CD14-positive monocyte (primary cell): ENCODE measurements at regions of chr2 and their contacts with region 1.

Region 1: GRCh38 chr2:231612179-231613053 is 19.8 kb downstream of the TEX44 start:
- DNase-seq: peak; percentile 98 to 99 (median 99)
- H3K4me3 ChIP-seq: peak overlapping the region in 1 of 3 experiments; percentile 76
- H3K4me3 Mint-ChIP-seq: peak overlapping the region; percentile 55 to 92
- H3K27ac ChIP-seq: peak overlapping the region; percentile 75 to 82
- H3K27ac Mint-ChIP-seq: peak overlapping the region; percentile 93 to 99 (median 96)
- H3K4me1 ChIP-seq: peaks cover 42 to 49% of the 10 kb centered on the region in 2 donors
- H3K4me1 Mint-ChIP-seq: peaks cover 53% of the 10 kb centered on the region
- H3K27me3 ChIP-seq: peaks cover 2 to 26% of the 10 kb centered on the region in 2 donors
- H3K27me3 Mint-ChIP-seq: peaks cover 20 to 39% (median 37%) of the 10 kb centered on the region in 3 donors
- CTCF ChIP-seq: peak; percentile 96

Region 2: GRCh38 chr2:231514103-231514950 is 98.1 kb before region 1 on chr2:
- intact Hi-C with region 1: loop called in 1 of 2 experiments (anchors 5 kb)
- DNase-seq: peak; percentile 93 to 99 (median 98)
- H3K4me3 ChIP-seq: peak overlapping the region; percentile 80 to 93 (median 86)
- H3K4me3 Mint-ChIP-seq: peak overlapping the region; percentile 83 to 95
- H3K27ac ChIP-seq: peak overlapping the region; percentile 67 to 89
- H3K27ac Mint-ChIP-seq: peak overlapping the region; percentile 91 to 97 (median 94)
- H3K4me1 ChIP-seq: peaks cover 6 to 11% of the 10 kb centered on the region in 2 donors
- H3K4me1 Mint-ChIP-seq: peaks cover 12% of the 10 kb centered on the region
- H3K27me3 ChIP-seq: no peaks in the 10 kb centered on the region
- H3K27me3 Mint-ChIP-seq: peaks cover 0 to 6% (median 5%) of the 10 kb centered on the region in 3 donors
- CTCF ChIP-seq: no peak

Region 3: GRCh38 chr2:231662028-231662810 is 49.8 kb after region 1 on chr2:
- intact Hi-C with region 1: loop called (anchors 5 kb)
- DNase-seq: peak; percentile 97 to 99 (median 98)
- H3K4me3 ChIP-seq: peak overlapping the region; percentile 30 to 71 (median 34)
- H3K4me3 Mint-ChIP-seq: peak overlapping the region; percentile 65 to 80
- H3K27ac ChIP-seq: peak overlapping the region; percentile 86 to 93
- H3K27ac Mint-ChIP-seq: peak overlapping the region; percentile 84 to 94 (median 91)
- H3K4me1 ChIP-seq: peaks cover 39 to 40% of the 10 kb centered on the region in 2 donors
- H3K4me1 Mint-ChIP-seq: peaks cover 30% of the 10 kb centered on the region
- H3K27me3 ChIP-seq: no peaks in the 10 kb centered on the region
- H3K27me3 Mint-ChIP-seq: peaks cover 0 to 6% (median 1%) of the 10 kb centered on the region in 3 donors
- CTCF ChIP-seq: no peak

Region 4: GRCh38 chr2:231706731-231707624 is 94.6 kb after region 1 on chr2:
- intact Hi-C with region 1: loop called in 1 of 2 experiments (anchors 2 kb)
- DNase-seq: peak; percentile 98
- H3K4me3 ChIP-seq: peak overlapping the region; percentile 87 to 99 (median 92)
- H3K4me3 Mint-ChIP-seq: peak overlapping the region; percentile 88 to 97
- H3K27ac ChIP-seq: peak overlapping the region; percentile 99 to 100
- H3K27ac Mint-ChIP-seq: peak overlapping the region; percentile 98 to 100 (median 100)
- H3K4me1 ChIP-seq: peaks cover 30 to 31% of the 10 kb centered on the region in 2 donors
- H3K4me1 Mint-ChIP-seq: peaks cover 25% of the 10 kb centered on the region
- H3K27me3 ChIP-seq: no peaks in the 10 kb centered on the region
- H3K27me3 Mint-ChIP-seq: no peaks in the 10 kb centered on the region
- CTCF ChIP-seq: peak; percentile 93

Region 5: DNA sequence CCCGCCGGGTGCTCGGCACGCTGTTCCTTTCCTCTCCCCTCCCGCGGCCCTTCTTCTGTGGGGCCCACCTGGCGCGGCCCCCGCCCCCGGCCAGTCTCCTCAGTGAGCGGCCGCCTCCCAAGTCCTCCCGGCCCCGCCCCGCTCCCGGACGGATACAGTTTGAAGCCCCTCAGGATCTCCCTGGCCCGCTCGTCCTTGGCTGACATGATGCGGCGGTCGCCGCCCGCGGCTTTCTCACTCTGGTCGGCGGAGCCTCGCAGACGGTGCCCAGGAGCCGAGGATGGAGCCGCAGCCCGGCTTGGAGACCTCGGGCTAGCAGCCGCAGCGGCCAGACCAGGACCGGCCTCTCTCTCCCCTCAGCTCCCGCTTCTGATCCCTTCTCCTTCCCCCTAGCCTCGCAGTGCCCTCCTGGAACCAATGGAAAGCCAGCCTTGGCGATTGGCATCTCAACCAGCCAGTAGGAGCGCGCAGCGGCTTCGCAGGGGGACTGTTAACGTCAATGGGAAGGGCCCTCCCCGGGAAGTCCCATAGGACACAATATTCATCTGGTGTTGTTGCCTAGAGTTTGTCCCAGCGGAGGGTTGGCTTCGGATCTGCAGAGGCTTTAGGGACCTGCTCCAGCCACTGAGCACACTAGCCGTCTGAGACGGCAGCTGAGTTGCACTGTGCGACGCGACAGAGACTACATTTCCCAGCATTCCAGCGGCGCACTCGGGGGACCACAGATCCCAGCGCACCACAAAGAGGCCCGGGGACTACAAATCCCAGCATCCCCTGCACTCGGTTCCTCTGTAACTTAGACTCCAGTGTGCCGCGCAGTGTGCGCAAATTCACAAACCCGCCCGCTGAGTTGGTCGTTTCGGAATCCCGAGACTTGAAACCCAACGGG is 168.7 kb after region 1 on chr2 and contains the start of gene PDE6D:
- intact Hi-C with region 1: loop called (anchors 5 to 10 kb)
- DNase-seq: peak; percentile 95 to 96 (median 95)
- H3K4me3 ChIP-seq: peak within 1 kb of the TSS; percentile 81 to 97 (median 94)
- H3K4me3 Mint-ChIP-seq: peak within 1 kb of the TSS; percentile 97 to 98
- H3K27ac ChIP-seq: peak within 1 kb of the TSS; percentile 33 to 86
- H3K27ac Mint-ChIP-seq: peak within 1 kb of the TSS; percentile 93 to 98 (median 97)
- H3K4me1 ChIP-seq: peaks cover 24 to 37% of the 10 kb centered on the region in 2 donors
- H3K4me1 Mint-ChIP-seq: peaks cover 37% of the 10 kb centered on the region
- H3K27me3 ChIP-seq: peaks cover 0 to 9% of the 10 kb centered on the region in 2 donors
- H3K27me3 Mint-ChIP-seq: peaks cover 4 to 13% (median 7%) of the 10 kb centered on the region in 3 donors
- CTCF ChIP-seq: no peak
- polyA plus RNA-seq, gene PDE6D: 28.4 to 54.6 (median 50.5) TPM